HCT116 (cell line): ENCODE measurements at regions of chr19 and their contacts with region 1.

Region 1: DNA sequence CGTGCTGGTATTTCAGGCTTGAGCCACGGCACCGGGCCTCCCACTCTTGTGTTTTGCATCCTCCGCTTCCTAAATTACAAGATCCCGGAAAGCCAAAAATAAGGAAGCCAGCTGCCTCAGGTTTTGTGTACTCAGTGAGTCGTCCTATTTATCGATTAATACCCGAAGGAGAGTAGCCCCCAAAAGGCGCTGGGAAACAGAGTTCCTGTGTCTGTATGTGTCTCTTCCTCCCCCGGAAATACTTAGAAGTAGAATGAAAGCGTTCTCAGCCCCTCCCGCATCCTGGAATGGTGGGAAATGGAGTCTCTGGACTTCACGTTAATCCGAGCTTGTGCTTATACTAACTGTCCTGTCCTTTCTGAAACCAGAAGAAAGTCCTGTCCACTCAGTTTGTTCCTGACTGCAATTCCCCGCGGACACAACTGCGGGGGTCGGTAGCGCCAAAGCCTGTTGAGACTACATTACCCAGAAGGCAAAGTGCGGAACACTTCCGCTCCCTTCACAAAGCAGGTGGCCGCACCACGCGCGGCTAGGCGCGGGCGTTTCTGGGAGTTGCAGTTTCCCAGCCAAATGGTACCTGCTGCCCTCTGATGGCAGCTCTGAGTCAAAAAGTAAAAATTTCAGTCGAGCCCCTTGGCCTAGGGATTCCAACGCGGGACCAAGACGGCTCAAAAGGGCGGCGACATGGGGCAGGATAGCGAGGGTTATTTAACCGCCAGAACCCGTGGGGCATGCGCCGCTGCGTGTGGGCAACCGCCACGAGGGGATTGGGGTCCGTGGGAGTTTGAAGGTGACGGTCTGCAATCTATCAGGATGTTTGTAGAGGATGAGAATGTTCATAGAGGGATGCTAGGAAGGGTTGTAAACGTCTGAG is 2.2 kb upstream of the GSK3A start:
- DNase-seq: peak; percentile 93
- ATAC-seq: peak; percentile 40
- H3K4me3 ChIP-seq: peak overlapping the region; percentile 69 to 93
- H3K27ac ChIP-seq: peak overlapping the region; percentile 78
- H3K4me1 ChIP-seq: peaks cover 13 to 45% of the 10 kb centered on the region in 2 experiments
- H3K27me3 ChIP-seq: no peaks in the 10 kb centered on the region
- CTCF ChIP-seq: peak; percentile 51 to 82 (median 65)
- POLR2A ChIP-seq: peak; percentile 63
- RAD21 ChIP-seq: peak; percentile 57

Region 2: GRCh38 chr19:42132851-42133528 is 111.6 kb before region 1 on chr19:
- CTCF ChIA-PET with region 1: interaction called, 4 read pairs
- POLR2A ChIA-PET with region 1: interaction called, 4 read pairs
- RAD21 ChIA-PET with region 1: no interaction called
- intact Hi-C with region 1: loop called (anchors 1 kb)
- DNase-seq: peak; percentile 13
- ATAC-seq: peak; percentile 93
- H3K4me3 ChIP-seq: peak overlapping the region in 1 of 2 experiments; percentile 13; a peak in 1 of 4 replicates
- H3K27ac ChIP-seq: no peak overlapping the region
- H3K4me1 ChIP-seq: peaks cover 2 to 9% of the 10 kb centered on the region in 2 experiments; a peak in 2 of 4 replicates
- H3K27me3 ChIP-seq: peaks cover 14% of the 10 kb centered on the region
- CTCF ChIP-seq: peak; percentile 81 to 94 (median 92)
- POLR2A ChIP-seq: no peak
- RAD21 ChIP-seq: peak; percentile 98

Region 3: GRCh38 chr19:42143341-42144234 is 101.0 kb before region 1 on chr19:
- CTCF ChIA-PET with region 1: no interaction called
- POLR2A ChIA-PET with region 1: no interaction called
- RAD21 ChIA-PET with region 1: no interaction called
- intact Hi-C with region 1: no loop called
- DNase-seq: no peak
- ATAC-seq: peak; percentile 46; the same call in 1 of the 2 replicates
- H3K4me3 ChIP-seq: no peak overlapping the region
- H3K27ac ChIP-seq: no peak overlapping the region
- H3K4me1 ChIP-seq: no peaks in the 10 kb centered on the region
- H3K27me3 ChIP-seq: peaks cover 29% of the 10 kb centered on the region; the same call in 1 of the 2 replicates
- CTCF ChIP-seq: no peak
- POLR2A ChIP-seq: no peak
- RAD21 ChIP-seq: no peak

Region 4: GRCh38 chr19:42254989-42255765 is 10.6 kb after region 1 on chr19 and contains the start of gene ERF:
- CTCF ChIA-PET with region 1: interaction called, 5 read pairs
- POLR2A ChIA-PET with region 1: interaction called, 16 read pairs
- RAD21 ChIA-PET with region 1: interaction called in 1 of 2 experiments, 5 read pairs
- intact Hi-C with region 1: no loop called
- DNase-seq: peak; percentile 65
- ATAC-seq: peak; percentile 69
- H3K4me3 ChIP-seq: peak within 1 kb of the TSS; percentile 94 to 96
- H3K27ac ChIP-seq: peak within 1 kb of the TSS; percentile 99
- H3K4me1 ChIP-seq: peaks cover 45 to 62% of the 10 kb centered on the region in 2 experiments
- H3K27me3 ChIP-seq: no peaks in the 10 kb centered on the region
- CTCF ChIP-seq: no peak
- POLR2A ChIP-seq: peak; percentile 53
- RAD21 ChIP-seq: no peak
- total RNA-seq, gene ERF: 96.1 TPM

Region 5: DNA sequence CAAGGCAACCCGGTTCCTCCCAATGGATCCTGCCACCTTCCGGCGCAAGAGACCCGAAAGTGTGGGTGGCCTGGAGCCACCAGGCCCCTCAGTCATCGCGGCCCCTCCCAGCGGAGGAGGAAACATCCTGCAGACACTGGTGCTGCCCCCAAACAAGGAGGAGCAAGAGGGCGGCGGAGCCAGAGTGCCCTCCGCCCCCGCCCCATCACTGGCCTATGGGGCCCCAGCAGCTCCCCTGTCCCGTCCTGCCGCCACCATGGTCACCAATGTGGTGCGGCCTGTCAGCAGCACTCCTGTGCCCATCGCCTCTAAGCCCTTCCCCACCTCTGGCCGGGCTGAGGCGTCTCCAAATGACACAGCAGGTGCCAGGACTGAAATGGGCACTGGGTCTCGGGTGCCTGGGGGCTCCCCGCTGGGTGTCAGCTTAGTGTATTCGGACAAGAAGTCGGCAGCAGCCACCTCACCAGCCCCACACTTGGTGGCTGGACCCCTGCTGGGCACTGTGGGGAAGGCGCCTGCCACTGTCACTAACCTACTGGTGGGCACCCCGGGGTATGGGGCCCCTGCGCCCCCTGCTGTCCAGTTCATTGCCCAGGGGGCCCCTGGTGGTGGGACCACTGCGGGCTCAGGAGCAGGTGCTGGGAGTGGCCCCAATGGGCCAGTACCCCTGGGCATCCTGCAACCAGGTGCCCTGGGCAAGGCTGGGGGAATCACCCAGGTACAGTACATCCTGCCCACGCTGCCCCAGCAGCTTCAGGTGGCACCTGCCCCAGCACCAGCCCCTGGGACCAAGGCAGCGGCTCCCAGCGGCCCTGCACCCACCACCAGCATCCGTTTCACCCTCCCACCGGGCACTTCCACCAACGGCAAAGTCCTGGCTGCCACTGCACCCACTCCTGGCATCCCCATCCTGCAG is 46.2 kb after region 1 on chr19:
- CTCF ChIA-PET with region 1: interaction called, 26 read pairs
- POLR2A ChIA-PET with region 1: no interaction called
- RAD21 ChIA-PET with region 1: interaction called in 1 of 2 experiments, 3 read pairs
- intact Hi-C with region 1: no loop called
- DNase-seq: no peak
- ATAC-seq: peak; percentile 79
- H3K4me3 ChIP-seq: no peak overlapping the region
- H3K27ac ChIP-seq: peak overlapping the region; percentile 35; the same call in 1 of the 2 replicates
- H3K4me1 ChIP-seq: peaks cover 6 to 27% of the 10 kb centered on the region in 2 experiments; a peak in 3 of 4 replicates
- H3K27me3 ChIP-seq: no peaks in the 10 kb centered on the region
- CTCF ChIP-seq: peak; percentile 78 to 91 (median 86)
- POLR2A ChIP-seq: no peak
- RAD21 ChIP-seq: no peak; the same call in 1 of the 2 replicates

Region 6: DNA sequence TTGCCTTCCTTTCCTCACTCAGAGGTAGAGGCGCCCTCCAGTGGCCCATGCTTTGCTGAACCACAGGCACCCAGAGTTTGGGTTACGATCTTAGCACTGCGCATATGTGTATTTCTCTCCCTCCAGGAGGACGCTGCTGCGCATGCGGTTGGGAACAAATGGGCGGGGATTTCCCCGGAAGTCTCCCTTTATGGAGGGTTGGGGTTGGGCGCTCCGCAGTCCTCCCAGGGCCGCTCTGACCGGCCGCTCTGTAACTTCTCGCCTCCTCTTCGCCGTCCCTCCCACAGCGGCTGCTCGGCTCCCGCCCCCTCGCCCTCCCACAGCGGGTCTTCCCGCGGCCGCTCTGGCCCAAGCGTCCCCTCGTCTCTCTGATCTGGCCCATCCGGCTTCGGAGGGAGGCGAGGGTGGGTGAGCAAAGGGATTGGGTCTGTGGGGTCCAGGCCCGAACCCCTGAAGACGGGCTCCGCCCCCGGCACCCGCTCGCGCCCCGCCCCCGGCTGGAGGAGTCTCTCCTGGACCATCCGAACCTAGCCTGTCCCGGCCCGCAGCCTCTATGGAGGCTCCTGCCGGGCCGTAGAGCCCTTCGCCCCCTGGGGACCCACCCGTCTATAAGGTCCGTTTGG is 80.8 kb after region 1 on chr19 and contains the start of gene MEGF8:
- CTCF ChIA-PET with region 1: interaction called, 4 read pairs
- POLR2A ChIA-PET with region 1: interaction called, 3 read pairs
- RAD21 ChIA-PET with region 1: no interaction called
- intact Hi-C with region 1: loop called (anchors 1 kb)
- DNase-seq: peak; percentile 97
- ATAC-seq: peak; percentile 96
- H3K4me3 ChIP-seq: peak within 1 kb of the TSS; percentile 90 to 95
- H3K27ac ChIP-seq: peak within 1 kb of the TSS; percentile 62
- H3K4me1 ChIP-seq: peaks cover 10 to 17% of the 10 kb centered on the region in 2 experiments
- H3K27me3 ChIP-seq: no peaks in the 10 kb centered on the region
- CTCF ChIP-seq: peak; percentile 90 to 94 (median 94)
- POLR2A ChIP-seq: peak; percentile 31
- RAD21 ChIP-seq: peak; percentile 86
- total RNA-seq, gene MEGF8: 24.0 TPM